Posterior cingulate gyrus (tissue), 11 donors: ENCODE measurements at regions of chr15 and their contacts with region 1.

Region 1: DNA sequence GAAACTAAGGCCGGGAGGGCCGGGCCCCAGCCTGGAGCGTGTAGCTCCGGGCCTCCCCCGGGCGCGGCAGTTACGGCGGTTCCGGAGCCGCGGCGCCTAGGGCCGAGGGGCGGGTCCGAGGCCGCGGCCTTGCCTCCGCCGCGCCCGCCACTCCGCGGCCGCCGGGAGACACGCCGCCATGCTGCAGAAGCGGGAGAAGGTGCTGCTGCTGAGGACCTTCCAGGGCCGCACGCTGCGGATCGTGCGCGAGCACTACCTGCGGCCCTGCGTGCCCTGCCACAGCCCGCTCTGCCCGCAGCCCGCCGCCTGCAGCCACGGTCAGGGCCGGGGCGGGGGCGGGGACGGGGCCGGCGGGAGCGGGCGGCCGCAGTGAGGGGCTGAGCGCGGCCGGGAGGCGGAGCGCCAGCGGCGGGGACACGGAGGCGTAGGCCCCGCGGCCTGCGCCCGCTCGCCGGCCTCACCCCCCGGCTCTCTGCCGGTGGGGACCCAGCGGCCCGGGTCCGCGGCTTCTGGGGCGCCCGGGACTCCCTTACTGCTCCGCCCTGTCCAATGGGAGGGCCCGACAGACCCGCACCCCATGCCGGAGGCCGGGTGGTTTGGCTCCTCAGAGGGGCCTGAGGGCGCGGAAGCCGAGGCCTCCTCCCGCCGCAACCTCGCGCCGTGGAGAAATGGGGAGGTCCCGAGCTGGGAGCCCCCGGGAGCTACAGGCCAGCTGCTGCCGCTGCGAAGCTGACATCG is at the start of gene DIS3L:
- DNase-seq: peak; percentile 23 to 91 (median 42)

Region 2: GRCh38 chr15:65638681-65639089 is 654.9 kb before region 1 on chr15:
- intact Hi-C with region 1: loop called (anchors 10 kb)
- DNase-seq: peak in 2 of 10 donors; percentile 13 to 37

Region 3: DNA sequence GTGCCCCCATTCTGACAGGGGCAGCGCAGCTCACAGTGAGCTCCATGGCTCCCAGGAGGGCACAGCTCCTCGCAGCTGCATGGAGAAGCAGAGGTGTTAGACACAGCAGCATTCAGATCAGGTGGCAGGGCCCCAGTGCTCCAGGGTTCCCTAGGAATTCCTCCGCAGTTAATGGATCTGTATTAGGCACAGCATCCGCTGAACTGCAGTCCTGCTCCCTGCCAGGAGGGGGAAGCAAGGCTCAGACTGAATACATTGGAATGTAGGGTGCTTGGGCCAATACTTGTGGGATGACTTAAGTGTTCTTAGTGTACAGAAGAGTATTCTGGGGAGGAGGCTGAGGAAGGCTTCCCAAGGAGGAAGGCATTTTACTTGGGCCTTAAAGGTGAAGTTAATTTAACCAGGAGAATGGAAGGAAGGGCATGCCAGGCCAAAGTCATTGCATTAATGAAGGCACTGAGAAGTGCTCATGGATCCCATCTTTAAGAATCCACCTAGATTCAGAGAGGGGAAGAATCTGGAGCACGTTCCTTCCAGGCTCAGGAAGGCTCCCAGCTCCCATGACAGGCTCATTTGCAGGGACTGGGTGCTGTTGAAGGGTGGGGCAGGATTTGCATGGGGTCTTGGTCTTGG is 312.6 kb before region 1 on chr15:
- intact Hi-C with region 1: loop called (anchors 5 kb)
- DNase-seq: peak in 8 of 10 donors; percentile 34 to 86 (median 50)

Region 4: DNA sequence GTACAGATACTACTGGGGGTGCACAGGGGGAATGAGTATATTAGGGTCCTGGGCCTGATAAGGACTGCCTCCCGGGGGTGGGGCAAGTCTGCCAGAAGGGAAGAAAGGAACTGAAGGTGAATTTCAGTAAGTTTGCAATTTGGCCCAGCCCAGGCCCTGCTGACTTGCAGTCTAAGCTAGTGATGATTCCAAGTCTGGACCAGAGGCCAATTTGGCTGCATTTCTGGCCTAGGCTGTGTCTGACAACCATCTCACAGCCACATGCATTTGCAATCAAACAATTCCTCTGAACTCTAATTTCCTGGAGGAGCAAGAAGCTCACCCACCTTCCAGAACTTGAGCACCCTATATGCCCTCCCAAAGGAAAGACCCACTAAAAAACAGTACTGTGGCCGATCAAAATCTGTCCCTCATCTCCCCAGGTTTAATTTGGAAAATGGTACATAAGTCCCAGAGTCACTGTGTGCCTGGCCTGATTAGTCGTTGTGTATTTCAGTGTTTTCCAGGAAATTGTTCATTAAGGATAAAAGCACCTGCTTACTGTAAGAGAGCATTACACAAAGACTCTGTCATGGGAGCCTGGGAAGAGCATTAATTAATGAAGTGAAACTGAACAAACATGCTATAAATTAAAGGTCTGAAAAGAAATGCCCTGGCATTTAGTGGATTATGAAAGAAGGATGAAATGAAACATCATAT is 154.5 kb before region 1 on chr15:
- intact Hi-C with region 1: loop called (anchors 10 kb)
- DNase-seq: no peak

Region 5: GRCh38 chr15:66359740-66360139 is 66.2 kb after region 1 on chr15:
- intact Hi-C with region 1: no loop called
- DNase-seq: no peak

Region 6: DNA sequence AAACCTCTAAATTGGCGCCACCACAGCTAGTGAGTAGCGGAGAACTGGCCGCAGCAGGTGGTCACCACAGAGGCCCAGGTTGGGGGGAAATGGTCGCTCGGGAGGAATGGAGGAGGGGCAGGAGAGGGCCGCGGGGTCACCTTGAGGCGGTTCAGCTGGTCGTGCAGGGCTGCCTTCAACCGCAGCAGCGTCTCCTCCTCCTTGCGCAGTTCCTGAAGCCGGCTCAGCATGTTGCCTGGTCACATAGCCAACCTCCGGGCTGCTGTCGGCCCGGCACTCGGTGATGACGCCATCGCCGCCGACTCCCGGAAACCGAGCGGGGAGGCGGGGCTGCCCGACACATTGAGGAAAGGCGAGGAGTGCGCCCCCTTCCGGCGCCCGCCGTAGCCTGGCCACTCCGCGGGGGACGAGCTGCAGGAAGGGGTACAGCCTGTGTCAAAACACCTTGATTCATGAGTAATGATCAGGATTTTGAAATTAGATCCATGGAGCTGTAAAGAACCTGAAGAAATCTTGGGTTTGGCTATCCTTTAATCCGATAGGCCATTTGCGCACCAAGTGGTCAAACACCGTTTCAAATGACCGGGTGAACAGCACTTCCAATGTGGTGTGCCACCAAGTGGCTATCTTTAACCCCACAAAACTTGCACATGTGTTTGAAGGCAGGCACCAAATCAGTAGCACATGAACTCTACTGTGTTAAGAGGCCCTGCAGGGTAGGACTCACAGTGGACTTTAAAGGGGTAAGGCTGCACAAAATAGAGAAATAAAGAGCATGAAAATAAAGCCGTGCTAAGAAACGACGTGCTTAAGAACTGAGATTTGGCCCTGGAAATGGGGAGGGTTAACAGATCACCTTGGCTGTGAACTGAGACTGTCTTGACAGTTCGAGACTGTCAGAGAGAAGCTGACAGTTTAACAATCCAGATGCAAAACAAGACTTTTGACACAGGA is 204.2 kb after region 1 on chr15 and contains the start of gene SNAPC5:
- intact Hi-C with region 1: loop called (anchors 5 kb)
- DNase-seq: peak; percentile 92 to 100 (median 96)